Heart right ventricle (tissue), 16 donors: ENCODE measurements at regions of chr16 and their contacts with region 1.

Region 1: GRCh38 chr16:29973384-29974246 is at the start of gene TAOK2:
- DNase-seq: peak; percentile 99
- ATAC-seq: peak; percentile 96 to 98 (median 98)
- H3K4me3 ChIP-seq: peak within 1 kb of the TSS; percentile 69 to 99 (median 81)
- H3K27ac ChIP-seq: peak within 1 kb of the TSS; percentile 85 to 100 (median 94)
- H3K4me1 ChIP-seq: peaks cover 3 to 49% (median 38%) of the 10 kb centered on the region in 9 donors
- H3K27me3 ChIP-seq: no peaks in the 10 kb centered on the region
- CTCF ChIP-seq: peak in 1 of 9 donors; percentile 5
- total RNA-seq, gene TAOK2: 27.0 to 40.6 (median 32.7) TPM

Region 2: GRCh38 chr16:29805378-29806098 is 168.1 kb before region 1 on chr16:
- intact Hi-C with region 1: loop called in 3 of 10 experiments (anchors 10 kb)
- DNase-seq: peak; percentile 97 to 98
- ATAC-seq: peak; percentile 83 to 94 (median 90)
- H3K4me3 ChIP-seq: peak overlapping the region; percentile 65 to 99 (median 79)
- H3K27ac ChIP-seq: peak overlapping the region; percentile 94 to 100 (median 97)
- H3K4me1 ChIP-seq: peaks cover 27 to 47% (median 44%) of the 10 kb centered on the region in 9 donors
- H3K27me3 ChIP-seq: no peaks in the 10 kb centered on the region
- CTCF ChIP-seq: peak in 1 of 9 donors; percentile 1

Region 3: GRCh38 chr16:29961479-29962343 is 11.9 kb before region 1 on chr16 and contains the start of gene TMEM219:
- intact Hi-C with region 1: loop called in 1 of 10 experiments (anchors 1 kb)
- DNase-seq: peak; percentile 92 to 94
- ATAC-seq: peak; percentile 95 to 99 (median 97)
- H3K4me3 ChIP-seq: peak within 1 kb of the TSS; percentile 46 to 94 (median 81)
- H3K27ac ChIP-seq: peak within 1 kb of the TSS; percentile 93 to 98 (median 96)
- H3K4me1 ChIP-seq: peaks cover 0 to 35% (median 20%) of the 10 kb centered on the region in 9 donors
- H3K27me3 ChIP-seq: no peaks in the 10 kb centered on the region
- CTCF ChIP-seq: peak; percentile 29 to 69 (median 46)
- total RNA-seq, gene TMEM219: 53.0 to 105 (median 67.1) TPM

Region 4: GRCh38 chr16:29995911-29996772 is 22.5 kb after region 1 on chr16 and contains the start of gene INO80E:
- intact Hi-C with region 1: loop called in 5 of 10 experiments (anchors 1 to 2 kb)
- DNase-seq: peak; percentile 99 to 100
- ATAC-seq: peak; percentile 98 to 99 (median 99)
- H3K4me3 ChIP-seq: peak within 1 kb of the TSS; percentile 55 to 97 (median 82)
- H3K27ac ChIP-seq: peak within 1 kb of the TSS; percentile 87 to 99 (median 96)
- H3K4me1 ChIP-seq: peaks cover 7 to 40% (median 28%) of the 10 kb centered on the region in 9 donors
- H3K27me3 ChIP-seq: no peaks in the 10 kb centered on the region
- CTCF ChIP-seq: peak in 1 of 9 donors; percentile 18
- total RNA-seq, gene INO80E: 23.2 to 34.8 (median 30.6) TPM

Region 5: DNA sequence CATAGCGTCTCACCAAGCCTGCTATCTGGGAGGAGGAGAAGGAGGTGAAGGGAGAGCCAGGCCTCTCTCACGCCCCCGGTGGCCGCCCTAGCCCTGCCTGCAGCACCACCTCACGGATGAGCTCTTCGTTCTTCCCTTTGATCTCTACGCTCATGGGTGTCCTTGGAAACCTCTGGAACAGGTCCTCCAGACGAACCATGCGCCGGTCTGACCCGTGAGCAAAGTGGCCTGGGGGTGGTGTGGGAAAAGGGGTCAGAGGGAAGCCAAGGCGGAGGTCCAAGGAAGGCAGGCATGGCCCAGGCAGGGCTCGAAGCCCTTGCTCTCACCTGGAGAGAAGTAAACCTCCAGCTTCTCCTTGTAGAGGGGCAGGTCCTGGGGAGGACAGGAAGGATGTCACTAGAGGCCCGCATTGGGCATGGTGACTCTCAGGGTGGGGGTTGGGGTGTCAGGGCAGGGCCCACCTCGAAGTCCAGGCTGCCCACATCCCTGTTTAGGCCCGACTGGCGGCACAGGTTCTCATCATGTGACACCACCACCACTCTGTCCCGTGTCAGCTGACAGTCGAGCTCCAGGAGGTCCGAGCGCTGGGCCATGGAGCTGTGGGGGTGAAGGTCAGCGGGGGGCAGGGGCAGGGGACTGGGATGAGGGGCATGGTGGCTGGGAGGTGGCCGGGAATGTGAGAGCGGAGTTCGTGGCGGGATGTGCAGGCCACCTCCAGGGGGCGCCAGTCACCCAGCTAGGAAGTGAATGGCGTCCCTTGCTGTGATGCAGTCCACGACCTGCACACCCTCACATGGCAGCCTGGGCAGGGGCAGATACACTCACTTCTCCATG is 138.8 kb after region 1 on chr16:
- intact Hi-C with region 1: no loop called
- DNase-seq: peak in 1 of 2 donors; percentile 73
- ATAC-seq: peak in 7 of 8 donors; percentile 15 to 64 (median 50)
- H3K4me3 ChIP-seq: no peak overlapping the region
- H3K27ac ChIP-seq: no peak overlapping the region
- H3K4me1 ChIP-seq: peaks cover 0 to 9% (median 0%) of the 10 kb centered on the region in 9 donors
- H3K27me3 ChIP-seq: no peaks in the 10 kb centered on the region
- CTCF ChIP-seq: peak; percentile 32 to 71 (median 56)